ENCODE measurements at regions of chr3 and their contacts with region 1.

Region 1: GRCh38 chr3:46923559-46924350 is 46.2 kb downstream of the PTH1R start:
- DNase-seq: no peak
- H3K4me3 ChIP-seq: no peak overlapping the region
- H3K27ac ChIP-seq: no peak overlapping the region
- H3K4me1 ChIP-seq: peaks cover 4% of the 10 kb centered on the region; the same call in 1 of the 2 replicates
- H3K27me3 ChIP-seq: no peaks in the 10 kb centered on the region
- CTCF ChIP-seq: peak; percentile 72

Region 2: GRCh38 chr3:46998121-46998851 is 74.5 kb after region 1 on chr3:
- CTCF ChIA-PET with region 1: no interaction called
- POLR2A ChIA-PET with region 1: no interaction called
- intact Hi-C with region 1: loop called (anchors 1 kb)
- DNase-seq: peak; percentile 44 to 75
- H3K4me3 ChIP-seq: no peak overlapping the region
- H3K27ac ChIP-seq: no peak overlapping the region
- H3K4me1 ChIP-seq: no peaks in the 10 kb centered on the region
- H3K27me3 ChIP-seq: no peaks in the 10 kb centered on the region
- CTCF ChIP-seq: peak; percentile 79

Region 3: DNA sequence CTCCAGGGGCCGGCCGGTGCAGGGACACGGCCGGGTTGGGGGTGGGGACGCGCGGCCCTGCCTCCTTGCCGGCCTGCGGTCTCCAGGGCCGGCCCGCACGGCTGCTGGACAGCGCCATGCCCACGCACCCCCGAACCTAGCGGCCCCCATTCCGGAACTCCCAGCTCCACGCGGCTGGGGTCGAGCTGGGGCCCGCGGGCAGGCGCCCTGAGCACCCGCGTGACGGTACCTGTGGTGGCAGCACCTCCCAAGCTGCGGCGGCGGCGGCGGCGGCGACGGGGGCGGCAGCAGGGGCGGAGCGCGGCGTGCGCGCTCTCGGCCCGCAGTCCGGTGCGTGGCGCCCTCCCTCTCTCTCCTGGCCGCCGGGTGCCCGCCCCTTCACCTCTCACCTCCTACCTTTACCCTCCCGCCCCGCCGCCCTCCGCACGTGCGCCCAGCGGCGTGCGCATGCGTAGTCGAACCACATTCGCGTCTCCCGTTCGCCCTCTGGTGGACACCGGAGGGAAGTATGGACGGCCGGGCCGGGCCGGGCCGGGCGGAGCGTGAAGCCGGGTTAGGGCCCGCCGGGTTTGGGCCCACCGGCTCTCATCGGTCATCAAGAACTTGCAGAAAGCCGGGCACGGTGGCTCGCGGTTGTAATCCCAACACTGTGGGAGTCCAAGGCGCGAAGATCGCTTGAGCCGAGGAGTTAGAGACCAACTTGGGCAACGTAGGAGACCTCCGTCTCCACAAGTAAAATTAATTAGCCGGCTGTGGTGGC is 552.0 kb after region 1 on chr3 and contains the start of gene SCAP:
- CTCF ChIA-PET with region 1: no interaction called
- POLR2A ChIA-PET with region 1: interaction called, 11 read pairs
- intact Hi-C with region 1: no loop called
- DNase-seq: peak; percentile 67 to 94
- H3K4me3 ChIP-seq: peak within 1 kb of the TSS; percentile 94
- H3K27ac ChIP-seq: peak within 1 kb of the TSS; percentile 24; the same call in 1 of the 2 replicates
- H3K4me1 ChIP-seq: peaks cover 6% of the 10 kb centered on the region; the same call in 1 of the 2 replicates
- H3K27me3 ChIP-seq: no peaks in the 10 kb centered on the region
- CTCF ChIP-seq: peak; percentile 86
- total RNA-seq, gene SCAP: 71.5 and 85.0 TPM in 2 replicates

Measured in PC-9 (cell line).